Transverse colon (tissue), 4 donors: ENCODE measurements at regions of chrX and their contacts with region 1.

Region 1: GRCh38 chrX:18931972-18932371 is 51.9 kb downstream of the PHKA2 start:
- DNase-seq: no peak
- H3K4me3 ChIP-seq: no peak overlapping the region
- H3K27ac ChIP-seq: no peak overlapping the region
- H3K4me1 ChIP-seq: no peaks in the 10 kb centered on the region
- H3K27me3 ChIP-seq: no peaks in the 10 kb centered on the region
- CTCF ChIP-seq: peak in 3 of 5 experiments; percentile 27 to 30 (median 29)
- EP300 ChIP-seq: no peak
- POLR2A ChIP-seq: no peak

Region 2: DNA sequence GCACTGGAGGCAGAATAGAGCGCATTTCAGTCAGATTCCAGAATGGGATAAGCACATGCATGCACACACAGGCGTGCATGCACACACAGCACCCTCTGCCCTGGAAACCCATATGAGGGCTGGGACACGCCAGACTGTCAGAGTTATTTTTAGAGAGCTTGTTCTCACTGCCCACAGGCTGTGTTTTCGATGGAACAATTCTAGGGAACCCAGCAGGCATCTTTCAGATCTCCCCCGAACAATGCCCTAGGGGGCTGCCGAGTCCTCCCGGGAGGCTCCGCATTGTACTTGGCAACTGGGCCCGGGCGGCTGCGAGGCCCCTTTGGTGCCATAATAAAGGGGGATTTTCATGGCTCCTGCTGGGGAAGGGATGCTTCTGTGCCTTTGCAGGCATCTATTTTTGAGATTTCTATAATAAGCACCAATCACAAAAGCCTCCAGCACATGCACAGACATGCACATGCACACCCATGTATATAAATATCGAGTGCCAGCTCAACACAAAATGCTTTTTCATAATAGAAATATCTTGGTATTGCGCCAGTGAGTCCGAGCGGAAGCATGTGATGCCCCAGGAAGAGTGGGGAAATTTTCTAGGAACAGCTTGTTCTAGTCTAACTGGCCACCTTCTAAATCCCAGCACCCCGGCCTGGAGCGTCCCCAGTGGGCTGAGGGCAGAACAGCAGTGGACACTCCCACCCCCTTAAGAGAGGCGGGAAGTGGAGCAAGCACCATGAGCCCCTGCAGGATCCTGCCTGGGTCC is 36.6 kb before region 1 on chrX:
- in situ Hi-C with region 1: no loop called
- intact Hi-C with region 1: no loop called
- DNase-seq: no peak
- H3K4me3 ChIP-seq: no peak overlapping the region
- H3K27ac ChIP-seq: peak overlapping the region in 2 of 4 donors; percentile 9 to 19
- H3K4me1 ChIP-seq: no peaks in the 10 kb centered on the region
- H3K27me3 ChIP-seq: no peaks in the 10 kb centered on the region
- CTCF ChIP-seq: peak in 1 of 5 experiments; percentile 10
- EP300 ChIP-seq: no peak
- POLR2A ChIP-seq: no peak

Region 3: DNA sequence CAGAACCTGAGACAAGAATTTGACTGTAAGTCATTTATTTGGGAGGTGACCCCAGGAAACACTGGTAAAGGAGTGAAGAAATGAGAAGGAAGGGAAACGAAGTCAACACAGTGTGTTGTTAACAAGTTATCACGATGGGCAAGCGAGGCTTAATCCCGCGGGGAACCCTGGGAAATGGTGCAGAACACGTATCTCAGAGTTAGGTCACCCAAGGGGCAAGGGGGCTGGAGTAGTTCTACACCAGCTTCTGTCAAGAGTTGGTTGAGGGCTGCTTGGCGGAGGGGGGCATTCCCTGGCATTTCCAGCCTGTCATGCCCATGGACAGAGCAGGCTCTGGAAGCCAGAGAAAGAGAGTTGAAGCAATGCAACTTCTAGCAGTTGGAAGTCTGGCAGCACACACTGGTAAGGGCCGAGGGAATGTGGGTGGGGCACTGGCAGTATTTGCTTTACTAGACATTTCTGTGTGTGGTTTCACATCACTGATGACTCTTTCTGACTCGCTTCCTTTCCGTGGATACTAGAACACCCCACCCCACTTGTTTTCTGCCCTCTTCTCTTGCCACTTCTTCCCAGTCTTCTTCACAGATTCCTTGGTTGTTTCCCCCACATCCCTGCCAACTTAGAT is 242.5 kb after region 1 on chrX:
- in situ Hi-C with region 1: no loop called
- intact Hi-C with region 1: no loop called
- DNase-seq: no peak
- H3K4me3 ChIP-seq: no peak overlapping the region
- H3K27ac ChIP-seq: no peak overlapping the region
- H3K4me1 ChIP-seq: no peaks in the 10 kb centered on the region
- H3K27me3 ChIP-seq: no peaks in the 10 kb centered on the region
- CTCF ChIP-seq: no peak
- EP300 ChIP-seq: no peak
- POLR2A ChIP-seq: no peak

Region 4: GRCh38 chrX:19303256-19303880 is 371.4 kb after region 1 on chrX:
- in situ Hi-C with region 1: loop called in 1 of 4 experiments (anchors 25 kb)
- intact Hi-C with region 1: no loop called
- DNase-seq: no peak
- H3K4me3 ChIP-seq: no peak overlapping the region
- H3K27ac ChIP-seq: no peak overlapping the region
- H3K4me1 ChIP-seq: no peaks in the 10 kb centered on the region
- H3K27me3 ChIP-seq: no peaks in the 10 kb centered on the region
- CTCF ChIP-seq: no peak
- EP300 ChIP-seq: no peak
- POLR2A ChIP-seq: no peak